Psoas muscle (tissue), 8 donors: ENCODE measurements at regions of chr14 and their contacts with region 1.

Region 1: DNA sequence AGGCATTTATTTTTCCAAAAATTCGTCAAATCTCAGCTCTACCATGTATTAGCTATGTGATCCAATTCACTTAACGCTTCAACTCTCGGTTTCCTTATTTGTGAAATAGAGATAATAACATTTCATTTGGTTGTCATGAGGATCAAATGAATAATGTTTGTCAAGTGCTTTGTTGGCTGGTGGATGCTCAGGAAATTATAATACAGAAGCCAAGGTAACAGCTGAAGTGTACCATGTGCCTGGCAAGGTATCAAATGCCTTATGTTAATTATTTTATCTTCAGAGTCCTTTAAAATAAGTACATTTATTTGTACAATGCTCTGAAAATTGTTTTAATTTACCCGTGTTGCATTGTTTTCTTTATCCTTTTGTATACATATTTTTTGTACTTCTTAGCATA is 6.1 kb upstream of the PRKCH start:
- DNase-seq: no peak
- ATAC-seq: no peak
- H3K4me3 ChIP-seq: no peak overlapping the region
- H3K27ac ChIP-seq: no peak overlapping the region
- H3K4me1 ChIP-seq: no peaks in the 10 kb centered on the region
- H3K27me3 ChIP-seq: no peaks in the 10 kb centered on the region
- CTCF ChIP-seq: no peak

Region 2: GRCh38 chr14:60744566-60744965 is 570.7 kb before region 1 on chr14:
- intact Hi-C with region 1: no loop called
- DNase-seq: no peak
- ATAC-seq: no peak
- H3K4me3 ChIP-seq: no peak overlapping the region
- H3K27ac ChIP-seq: no peak overlapping the region
- H3K4me1 ChIP-seq: peaks cover 17% of the 10 kb centered on the region
- H3K27me3 ChIP-seq: no peaks in the 10 kb centered on the region
- CTCF ChIP-seq: no peak

Region 3: DNA sequence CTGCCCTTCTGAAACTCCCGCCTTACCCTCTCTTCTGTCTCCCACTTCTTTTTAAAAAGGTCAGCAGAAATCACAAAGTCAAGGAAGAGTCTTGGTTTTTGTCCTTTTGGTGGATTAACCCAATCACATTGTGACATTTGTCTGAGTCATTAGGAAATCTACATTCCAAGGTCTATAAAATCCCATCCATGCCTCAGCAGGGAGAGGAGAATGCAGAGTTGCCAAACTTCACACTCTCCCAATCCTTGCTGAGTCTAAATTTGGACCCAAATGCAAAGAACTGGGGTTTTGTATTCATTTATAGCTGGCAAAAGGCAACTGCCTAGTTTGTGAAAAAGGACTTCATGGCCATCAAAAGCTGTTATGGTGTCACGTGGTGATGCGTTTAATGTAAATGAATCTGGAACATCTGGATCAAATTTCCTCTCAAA is 102.1 kb before region 1 on chr14:
- intact Hi-C with region 1: no loop called
- DNase-seq: no peak
- ATAC-seq: peak in 2 of 4 donors; percentile 50 to 62
- H3K4me3 ChIP-seq: no peak overlapping the region
- H3K27ac ChIP-seq: peak overlapping the region; percentile 75
- H3K4me1 ChIP-seq: peaks cover 7% of the 10 kb centered on the region
- H3K27me3 ChIP-seq: no peaks in the 10 kb centered on the region
- CTCF ChIP-seq: no peak

Region 4: GRCh38 chr14:61252369-61253063 is 62.8 kb before region 1 on chr14:
- intact Hi-C with region 1: no loop called
- DNase-seq: peak; percentile 68 to 79
- ATAC-seq: peak; percentile 89 to 94 (median 92)
- H3K4me3 ChIP-seq: peak overlapping the region; percentile 19
- H3K27ac ChIP-seq: peak overlapping the region; percentile 72
- H3K4me1 ChIP-seq: peaks cover 41% of the 10 kb centered on the region
- H3K27me3 ChIP-seq: no peaks in the 10 kb centered on the region
- CTCF ChIP-seq: peak; percentile 88

Region 5: GRCh38 chr14:61456720-61457119 is 141.4 kb after region 1 on chr14:
- intact Hi-C with region 1: loop called in 1 of 2 experiments (anchors 10 kb)
- DNase-seq: peak; percentile 75 to 82
- ATAC-seq: peak; percentile 60 to 81 (median 73)
- H3K4me3 ChIP-seq: no peak overlapping the region
- H3K27ac ChIP-seq: no peak overlapping the region
- H3K4me1 ChIP-seq: peaks cover 6% of the 10 kb centered on the region
- H3K27me3 ChIP-seq: no peaks in the 10 kb centered on the region
- CTCF ChIP-seq: peak; percentile 80